ENCODE measurements at regions of chr9 and their contacts with region 1.

Region 1: GRCh38 chr9:4339357-4339756 is 39.5 kb upstream of the GLIS3 start:
- DNase-seq: peak; percentile 59 to 79 (median 68)
- H3K4me3 ChIP-seq: no peak overlapping the region
- H3K4me3 Mint-ChIP-seq: peak overlapping the region in 5 of 7 donors; percentile 5 to 63 (median 44)
- H3K27ac ChIP-seq: no peak overlapping the region
- H3K27ac Mint-ChIP-seq: peak overlapping the region in 6 of 8 donors; percentile 7 to 71 (median 40)
- H3K4me1 ChIP-seq: no peaks in the 10 kb centered on the region
- H3K4me1 Mint-ChIP-seq: peaks cover 3 to 7% (median 7%) of the 10 kb centered on the region in 3 donors
- H3K27me3 ChIP-seq: no peaks in the 10 kb centered on the region
- H3K27me3 Mint-ChIP-seq: peaks cover 8 to 9% of the 10 kb centered on the region in 2 donors

Region 2: DNA sequence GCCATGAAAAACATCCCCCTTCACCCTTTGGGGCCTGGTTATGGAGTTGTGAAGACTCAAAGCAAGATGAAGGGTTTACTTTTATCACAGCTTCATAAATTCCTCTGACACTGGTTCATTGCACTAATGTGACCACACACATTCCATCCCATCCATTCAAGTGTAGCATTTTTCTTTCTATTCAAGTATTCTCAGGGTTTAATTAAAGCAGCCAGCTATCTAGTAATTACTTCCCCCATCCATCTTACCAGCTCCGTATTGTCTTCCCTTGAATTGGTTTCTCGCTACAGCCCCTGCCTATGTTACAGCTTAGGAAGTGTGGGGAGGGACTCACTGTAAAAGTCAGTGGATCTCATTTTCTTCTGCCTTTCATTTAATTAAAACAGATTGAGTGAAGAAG is 426.5 kb before region 1 on chr9:
- CTCF ChIA-PET with region 1: no interaction called
- POLR2A ChIA-PET with region 1: no interaction called
- DNase-seq: no peak
- H3K4me3 ChIP-seq: no peak overlapping the region
- H3K4me3 Mint-ChIP-seq: no peak overlapping the region
- H3K27ac ChIP-seq: no peak overlapping the region
- H3K27ac Mint-ChIP-seq: no peak overlapping the region
- H3K4me1 ChIP-seq: no peaks in the 10 kb centered on the region
- H3K4me1 Mint-ChIP-seq: peaks cover 0 to 1% (median 0%) of the 10 kb centered on the region in 3 donors
- H3K27me3 ChIP-seq: no peaks in the 10 kb centered on the region
- H3K27me3 Mint-ChIP-seq: peaks cover 1 to 16% of the 10 kb centered on the region in 2 donors

Region 3: GRCh38 chr9:4315582-4316215 is 23.7 kb before region 1 on chr9:
- CTCF ChIA-PET with region 1: interaction called, 11 read pairs
- POLR2A ChIA-PET with region 1: no interaction called
- DNase-seq: peak; percentile 51 to 72 (median 54)
- H3K4me3 ChIP-seq: no peak overlapping the region
- H3K4me3 Mint-ChIP-seq: no peak overlapping the region
- H3K27ac ChIP-seq: no peak overlapping the region
- H3K27ac Mint-ChIP-seq: no peak overlapping the region
- H3K4me1 ChIP-seq: no peaks in the 10 kb centered on the region
- H3K4me1 Mint-ChIP-seq: no peaks in the 10 kb centered on the region
- H3K27me3 ChIP-seq: no peaks in the 10 kb centered on the region
- H3K27me3 Mint-ChIP-seq: peaks cover 5 to 26% of the 10 kb centered on the region in 2 donors

Region 4: DNA sequence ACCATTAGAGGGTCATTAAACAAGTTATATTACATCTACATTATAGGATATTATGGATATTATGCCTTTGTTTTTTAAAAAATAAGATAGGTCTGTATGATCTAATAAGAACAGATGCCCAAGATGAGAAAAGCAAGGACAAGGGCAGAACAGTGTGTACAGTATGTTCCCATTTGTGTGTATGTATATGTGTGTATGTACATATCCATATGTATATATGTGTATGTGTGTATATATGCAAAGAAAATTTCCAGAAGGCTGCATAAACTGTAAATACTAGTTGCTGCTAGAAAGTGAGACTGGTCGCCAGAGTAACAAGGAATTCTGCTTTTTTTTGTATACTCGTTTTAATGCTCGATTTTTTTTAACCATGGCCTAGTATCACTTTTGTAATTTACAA is 18.6 kb after region 1 on chr9:
- CTCF ChIA-PET with region 1: no interaction called
- POLR2A ChIA-PET with region 1: no interaction called
- DNase-seq: no peak
- H3K4me3 ChIP-seq: no peak overlapping the region
- H3K4me3 Mint-ChIP-seq: no peak overlapping the region
- H3K27ac ChIP-seq: no peak overlapping the region
- H3K27ac Mint-ChIP-seq: no peak overlapping the region
- H3K4me1 ChIP-seq: no peaks in the 10 kb centered on the region
- H3K4me1 Mint-ChIP-seq: no peaks in the 10 kb centered on the region
- H3K27me3 ChIP-seq: no peaks in the 10 kb centered on the region
- H3K27me3 Mint-ChIP-seq: peaks cover 4 to 18% of the 10 kb centered on the region in 2 donors

Region 5: GRCh38 chr9:4497855-4498254 is 158.5 kb after region 1 on chr9:
- CTCF ChIA-PET with region 1: no interaction called
- POLR2A ChIA-PET with region 1: no interaction called
- DNase-seq: no peak
- H3K4me3 ChIP-seq: no peak overlapping the region
- H3K4me3 Mint-ChIP-seq: no peak overlapping the region
- H3K27ac ChIP-seq: no peak overlapping the region
- H3K27ac Mint-ChIP-seq: no peak overlapping the region
- H3K4me1 ChIP-seq: no peaks in the 10 kb centered on the region
- H3K4me1 Mint-ChIP-seq: no peaks in the 10 kb centered on the region
- H3K27me3 ChIP-seq: peaks cover 6% of the 10 kb centered on the region
- H3K27me3 Mint-ChIP-seq: peaks cover 14 to 53% of the 10 kb centered on the region in 2 donors

Region 6: DNA sequence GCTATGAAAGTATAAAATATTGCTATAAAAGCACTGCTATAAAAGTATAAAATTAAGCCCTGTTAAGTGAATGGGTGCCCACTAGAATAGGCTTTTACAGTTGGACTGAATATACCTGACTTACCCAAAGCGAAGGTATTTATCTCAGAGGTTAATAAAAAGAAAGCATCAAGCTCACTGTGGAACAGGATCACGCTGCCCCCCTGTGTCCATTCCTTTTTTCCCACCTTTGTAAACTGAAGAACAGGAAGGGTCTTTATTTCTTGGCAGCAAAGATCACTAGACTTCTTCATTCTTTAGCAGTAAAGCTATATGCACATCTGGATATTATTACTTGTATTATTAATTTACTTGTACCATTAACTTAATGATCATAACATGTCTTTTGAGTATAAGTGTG is 300.7 kb after region 1 on chr9:
- CTCF ChIA-PET with region 1: interaction called, 10 read pairs
- POLR2A ChIA-PET with region 1: no interaction called
- DNase-seq: peak; percentile 19 to 61 (median 49)
- H3K4me3 ChIP-seq: no peak overlapping the region
- H3K4me3 Mint-ChIP-seq: no peak overlapping the region
- H3K27ac ChIP-seq: no peak overlapping the region
- H3K27ac Mint-ChIP-seq: peak overlapping the region in 1 of 8 donors; percentile 43
- H3K4me1 ChIP-seq: no peaks in the 10 kb centered on the region
- H3K4me1 Mint-ChIP-seq: peaks cover 5 to 16% (median 8%) of the 10 kb centered on the region in 3 donors
- H3K27me3 ChIP-seq: no peaks in the 10 kb centered on the region
- H3K27me3 Mint-ChIP-seq: peaks cover 1 to 3% of the 10 kb centered on the region in 2 donors